ENCODE measurements at regions of chr7 and their contacts with region 1.

Region 1: DNA sequence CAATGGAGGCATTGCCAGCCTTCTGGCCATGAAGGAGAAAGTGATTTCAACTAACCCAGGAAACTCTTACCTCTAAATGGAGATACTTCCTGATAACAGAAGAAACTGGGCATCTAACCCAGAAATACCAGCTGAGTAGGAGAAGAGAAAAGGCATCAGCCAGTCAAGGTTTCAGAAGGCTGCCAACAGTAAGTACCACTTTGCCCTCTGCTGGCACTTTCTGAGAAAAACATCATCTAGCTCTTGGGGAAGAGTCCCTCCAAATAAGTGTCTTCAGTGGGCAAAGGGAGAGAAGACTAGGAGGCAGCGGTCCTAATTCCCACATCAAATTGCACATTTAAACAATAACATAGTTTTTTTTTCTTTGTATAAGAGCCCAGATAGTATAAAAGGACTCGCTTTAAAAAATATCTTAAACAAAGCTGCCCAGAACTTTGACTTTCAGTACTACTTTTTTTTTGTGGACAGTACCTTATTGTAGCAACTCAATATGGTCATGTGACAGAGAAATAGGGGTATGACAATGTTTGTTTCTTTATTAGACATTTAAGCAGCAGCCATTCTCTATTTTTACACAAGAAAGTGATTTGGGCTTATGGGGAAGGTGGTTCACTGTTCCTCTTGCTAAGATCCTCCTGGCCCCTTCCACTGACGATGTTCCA is 157.3 kb downstream of the CTTNBP2 start:
- DNase-seq: peak; percentile 25
- ATAC-seq: peak; percentile 44
- H3K4me3 Mint-ChIP-seq: no peak overlapping the region
- H3K27ac Mint-ChIP-seq: no peak overlapping the region
- H3K4me1 Mint-ChIP-seq: no peaks in the 10 kb centered on the region
- H3K27me3 Mint-ChIP-seq: peaks cover 3% of the 10 kb centered on the region

Region 2: DNA sequence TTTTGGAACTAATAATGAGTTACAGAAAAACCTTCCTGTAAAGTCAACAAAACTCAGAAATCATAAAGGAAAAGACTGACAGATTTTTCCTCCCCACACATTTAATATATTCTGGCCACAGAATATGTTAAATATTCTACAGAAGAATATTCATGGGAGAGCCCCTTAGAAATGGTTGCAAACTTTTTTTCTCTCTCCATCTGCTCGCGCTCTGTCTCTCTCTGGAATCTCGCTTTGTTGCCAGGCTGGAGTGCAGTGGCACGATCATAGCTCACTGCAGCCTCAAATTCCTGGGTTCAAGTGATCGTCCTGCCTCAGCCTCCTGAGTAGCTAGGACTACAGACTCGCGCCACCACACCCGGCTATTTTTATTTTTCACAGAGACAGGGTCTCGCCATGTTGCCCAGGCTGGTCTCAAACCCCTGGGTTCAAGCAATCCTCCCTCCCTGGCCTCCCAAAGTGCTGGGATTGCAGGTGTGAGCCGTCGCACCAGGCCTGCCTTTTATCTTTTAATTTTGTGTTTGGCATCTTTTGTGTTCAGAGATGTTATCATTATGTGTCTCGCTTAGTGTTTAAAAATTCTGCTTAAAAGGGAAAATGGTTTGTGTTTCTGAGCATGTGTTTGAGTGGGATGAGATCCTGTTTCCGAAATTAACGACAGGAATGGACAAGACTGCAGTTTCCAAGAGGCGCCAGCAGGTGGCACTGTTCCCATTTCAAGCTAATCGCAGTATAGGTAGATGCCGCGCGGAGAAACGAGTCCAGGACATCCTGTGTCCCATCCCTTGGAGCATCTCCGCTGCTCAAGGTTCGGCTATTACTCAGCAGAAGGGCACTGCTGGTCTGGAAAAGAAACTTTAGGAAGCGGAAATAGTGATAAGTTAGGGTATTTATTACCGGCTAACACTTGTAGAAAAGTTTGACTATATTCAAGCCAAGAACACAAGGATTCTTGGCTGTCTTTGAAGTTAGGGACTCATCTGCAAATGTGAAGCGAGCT is 785.7 kb before region 1 on chr7:
- CTCF ChIA-PET with region 1: no interaction called
- POLR2A ChIA-PET with region 1: no interaction called
- intact Hi-C with region 1: loop called in 1 of 2 experiments (anchors 10 kb)
- DNase-seq: peak; percentile 86
- ATAC-seq: peak; percentile 85
- H3K4me3 Mint-ChIP-seq: no peak overlapping the region
- H3K27ac Mint-ChIP-seq: no peak overlapping the region
- H3K4me1 Mint-ChIP-seq: peaks cover 6% of the 10 kb centered on the region
- H3K27me3 Mint-ChIP-seq: peaks cover 3% of the 10 kb centered on the region

Region 3: GRCh38 chr7:117072620-117073118 is 643.2 kb before region 1 on chr7:
- CTCF ChIA-PET with region 1: no interaction called
- POLR2A ChIA-PET with region 1: no interaction called
- intact Hi-C with region 1: no loop called
- DNase-seq: no peak
- ATAC-seq: no peak
- H3K4me3 Mint-ChIP-seq: no peak overlapping the region
- H3K27ac Mint-ChIP-seq: no peak overlapping the region
- H3K4me1 Mint-ChIP-seq: peaks cover 16% of the 10 kb centered on the region
- H3K27me3 Mint-ChIP-seq: no peaks in the 10 kb centered on the region

Region 4: DNA sequence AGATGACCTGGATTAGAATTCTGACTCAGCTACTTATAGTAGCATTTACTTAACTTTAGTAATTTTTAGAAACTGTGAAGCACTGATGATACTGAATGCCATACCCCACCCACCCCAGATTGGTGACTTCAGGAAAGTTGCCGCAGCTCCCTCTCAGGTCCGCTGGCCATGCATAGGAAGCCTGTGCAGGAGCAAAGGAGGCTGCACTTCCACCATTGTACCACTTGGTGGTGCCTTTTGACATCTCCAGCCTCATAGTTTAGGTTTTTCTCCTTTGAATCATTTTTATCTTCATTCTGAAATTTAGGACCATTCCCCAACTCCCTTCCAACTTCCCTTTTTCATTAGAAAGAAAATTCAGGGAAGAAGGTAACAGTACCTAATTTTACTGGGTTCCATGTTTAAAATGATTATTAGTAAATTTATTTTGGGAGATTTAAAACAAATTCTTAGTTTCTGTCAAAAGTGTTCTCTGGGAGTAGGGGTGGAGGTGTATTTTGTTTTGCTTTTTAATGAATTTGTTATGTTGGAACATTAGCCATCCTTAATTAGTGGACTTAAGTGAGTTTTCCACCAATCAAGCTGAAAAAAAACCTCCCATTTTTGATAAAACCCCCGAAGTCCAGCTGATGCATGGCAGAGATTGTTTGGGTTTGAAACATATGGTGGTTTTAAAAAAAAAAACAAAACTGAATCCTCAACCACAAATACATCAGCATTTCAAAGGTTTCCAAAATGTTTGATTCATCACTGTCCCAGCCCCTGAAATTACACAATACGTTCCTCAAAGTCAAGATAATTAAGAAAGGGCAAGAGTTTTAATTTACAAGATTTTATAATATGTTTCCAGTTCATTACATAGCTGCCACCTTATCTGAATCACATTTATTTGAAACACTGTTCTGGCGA is 502.7 kb before region 1 on chr7:
- CTCF ChIA-PET with region 1: interaction called, 4 read pairs
- POLR2A ChIA-PET with region 1: no interaction called
- intact Hi-C with region 1: loop called in 1 of 2 experiments (anchors 2 kb)
- DNase-seq: peak; percentile 68
- ATAC-seq: peak; percentile 64
- H3K4me3 Mint-ChIP-seq: no peak overlapping the region
- H3K27ac Mint-ChIP-seq: no peak overlapping the region
- H3K4me1 Mint-ChIP-seq: no peaks in the 10 kb centered on the region
- H3K27me3 Mint-ChIP-seq: no peaks in the 10 kb centered on the region

Region 5: GRCh38 chr7:117399820-117400422 is 316.0 kb before region 1 on chr7:
- CTCF ChIA-PET with region 1: interaction called, 3 read pairs
- POLR2A ChIA-PET with region 1: no interaction called
- intact Hi-C with region 1: loop called (anchors 1 to 2 kb)
- DNase-seq: no peak
- ATAC-seq: no peak
- H3K4me3 Mint-ChIP-seq: no peak overlapping the region
- H3K27ac Mint-ChIP-seq: no peak overlapping the region
- H3K4me1 Mint-ChIP-seq: no peaks in the 10 kb centered on the region
- H3K27me3 Mint-ChIP-seq: no peaks in the 10 kb centered on the region

Region 6: GRCh38 chr7:117458977-117459583 is 256.8 kb before region 1 on chr7:
- CTCF ChIA-PET with region 1: interaction called, 3 read pairs
- POLR2A ChIA-PET with region 1: no interaction called
- intact Hi-C with region 1: loop called in 1 of 2 experiments (anchors 1 kb)
- DNase-seq: no peak
- ATAC-seq: no peak
- H3K4me3 Mint-ChIP-seq: no peak overlapping the region
- H3K27ac Mint-ChIP-seq: no peak overlapping the region
- H3K4me1 Mint-ChIP-seq: no peaks in the 10 kb centered on the region
- H3K27me3 Mint-ChIP-seq: no peaks in the 10 kb centered on the region